CD4-positive, alpha-beta memory T cell (primary cell): ENCODE measurements at regions of chr1 and their contacts with region 1.

Region 1: GRCh38 chr1:15128520-15129313 is 24.8 kb upstream of the TMEM51 start:
- DNase-seq: peak in 4 of 5 donors; percentile 40 to 59 (median 44)
- H3K4me3 ChIP-seq: no peak overlapping the region
- H3K4me3 Mint-ChIP-seq: no peak overlapping the region
- H3K27ac ChIP-seq: no peak overlapping the region
- H3K27ac Mint-ChIP-seq: no peak overlapping the region
- H3K4me1 ChIP-seq: no peaks in the 10 kb centered on the region
- H3K4me1 Mint-ChIP-seq: no peaks in the 10 kb centered on the region
- H3K27me3 ChIP-seq: no peaks in the 10 kb centered on the region
- H3K27me3 Mint-ChIP-seq: peaks cover 4 to 16% of the 10 kb centered on the region in 2 donors

Region 2: GRCh38 chr1:15245593-15246360 is 117.1 kb after region 1 on chr1:
- CTCF ChIA-PET with region 1: no interaction called
- POLR2A ChIA-PET with region 1: no interaction called
- intact Hi-C with region 1: no loop called
- DNase-seq: no peak
- H3K4me3 ChIP-seq: no peak overlapping the region
- H3K4me3 Mint-ChIP-seq: peak overlapping the region in 4 of 8 donors; percentile 5 to 61 (median 36)
- H3K27ac ChIP-seq: no peak overlapping the region
- H3K27ac Mint-ChIP-seq: no peak overlapping the region
- H3K4me1 ChIP-seq: peaks cover 25% of the 10 kb centered on the region
- H3K4me1 Mint-ChIP-seq: peaks cover 21 to 44% (median 30%) of the 10 kb centered on the region in 4 donors
- H3K27me3 ChIP-seq: no peaks in the 10 kb centered on the region
- H3K27me3 Mint-ChIP-seq: peaks cover 29 to 34% of the 10 kb centered on the region in 2 donors

Region 3: DNA sequence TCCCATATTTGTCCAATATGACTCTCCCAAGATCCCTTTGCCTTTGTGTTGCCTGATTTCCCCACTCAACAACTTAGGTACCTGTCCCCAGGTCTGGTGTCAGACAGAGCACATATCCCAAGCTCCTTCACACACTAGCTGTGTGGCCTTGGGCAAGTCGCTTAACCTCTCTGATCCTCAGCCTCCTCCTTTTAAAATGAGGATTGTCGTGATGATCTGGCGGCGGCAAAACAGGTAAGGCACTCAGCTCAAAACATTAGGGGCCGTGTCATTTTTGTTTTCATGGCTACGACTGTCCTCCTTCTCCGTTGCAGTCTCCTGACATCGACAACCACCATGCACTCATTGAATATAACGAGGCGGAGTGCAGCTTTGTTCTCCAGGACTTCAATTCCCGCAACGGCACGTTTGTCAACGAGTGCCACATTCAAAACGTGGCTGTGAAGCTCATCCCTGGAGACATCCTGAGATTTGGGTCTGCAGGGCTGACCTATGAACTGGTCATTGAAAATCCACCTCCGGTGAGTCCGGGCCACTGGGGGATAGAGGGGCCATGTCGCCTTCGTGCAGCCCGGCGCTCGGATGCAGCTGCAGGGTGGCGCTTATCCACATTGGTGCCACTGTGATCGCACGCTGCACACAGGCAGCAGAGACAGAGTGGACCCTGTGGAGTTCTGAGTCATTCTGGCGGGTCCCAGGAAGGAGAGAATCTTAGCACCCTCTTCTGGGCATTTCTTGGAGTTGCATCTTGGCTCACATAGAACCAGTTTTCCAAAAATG is 143.5 kb after region 1 on chr1:
- CTCF ChIA-PET with region 1: interaction called, 18 read pairs
- POLR2A ChIA-PET with region 1: no interaction called
- intact Hi-C with region 1: no loop called
- DNase-seq: peak in 1 of 5 donors; percentile 20
- H3K4me3 ChIP-seq: no peak overlapping the region
- H3K4me3 Mint-ChIP-seq: peak overlapping the region in 1 of 8 donors; percentile 17
- H3K27ac ChIP-seq: no peak overlapping the region
- H3K27ac Mint-ChIP-seq: no peak overlapping the region
- H3K4me1 ChIP-seq: no peaks in the 10 kb centered on the region
- H3K4me1 Mint-ChIP-seq: peaks cover 0 to 6% (median 1%) of the 10 kb centered on the region in 4 donors
- H3K27me3 ChIP-seq: peaks cover 5% of the 10 kb centered on the region
- H3K27me3 Mint-ChIP-seq: peaks cover 19 to 28% of the 10 kb centered on the region in 2 donors

Region 4: GRCh38 chr1:15299806-15300205 is 171.1 kb after region 1 on chr1:
- CTCF ChIA-PET with region 1: interaction called, 75 read pairs
- POLR2A ChIA-PET with region 1: no interaction called
- intact Hi-C with region 1: no loop called
- DNase-seq: no peak
- H3K4me3 ChIP-seq: no peak overlapping the region
- H3K4me3 Mint-ChIP-seq: no peak overlapping the region
- H3K27ac ChIP-seq: no peak overlapping the region
- H3K27ac Mint-ChIP-seq: no peak overlapping the region
- H3K4me1 ChIP-seq: no peaks in the 10 kb centered on the region
- H3K4me1 Mint-ChIP-seq: peaks cover 0 to under 1% (median 0%) of the 10 kb centered on the region in 4 donors
- H3K27me3 ChIP-seq: no peaks in the 10 kb centered on the region
- H3K27me3 Mint-ChIP-seq: peaks cover 1 to 4% of the 10 kb centered on the region in 2 donors

Region 5: DNA sequence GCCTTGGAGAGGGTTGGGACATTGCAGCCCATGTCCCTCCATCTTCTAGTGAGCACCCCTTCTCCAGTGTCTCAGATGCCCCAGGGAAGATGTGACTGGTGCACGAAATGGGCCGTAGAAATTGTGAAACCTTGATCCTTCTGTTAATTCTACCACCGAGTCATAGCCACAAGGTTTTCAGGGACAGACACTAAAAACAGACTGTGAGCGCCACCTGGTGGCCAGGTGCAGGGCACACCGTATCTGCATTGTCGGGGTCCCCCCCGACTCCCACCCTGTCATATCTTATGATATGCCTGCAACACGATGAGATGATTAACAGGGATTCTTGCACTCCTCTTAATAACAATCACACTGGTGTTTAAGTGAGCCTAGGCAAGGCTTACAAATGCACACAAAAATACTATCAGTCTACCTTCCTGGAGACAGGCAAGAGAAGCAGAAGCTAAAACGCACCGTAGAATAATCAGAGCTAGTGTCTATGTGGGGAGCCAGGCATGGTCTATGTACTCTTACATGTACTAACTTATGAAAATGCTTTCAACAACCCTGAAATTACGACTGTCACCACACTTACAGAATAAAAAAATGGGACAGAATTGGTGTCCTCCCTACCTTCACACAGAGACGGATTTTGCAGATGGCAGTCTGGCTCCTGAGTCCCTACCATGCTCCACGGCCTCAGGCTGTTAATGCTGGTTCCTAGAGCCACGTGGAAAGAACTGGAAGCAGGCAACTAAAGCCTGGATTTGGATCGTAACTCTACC is 176.2 kb after region 1 on chr1:
- CTCF ChIA-PET with region 1: interaction called, 75 read pairs
- POLR2A ChIA-PET with region 1: no interaction called
- intact Hi-C with region 1: no loop called
- DNase-seq: peak in 4 of 5 donors; percentile 42 to 48 (median 48)
- H3K4me3 ChIP-seq: no peak overlapping the region
- H3K4me3 Mint-ChIP-seq: no peak overlapping the region
- H3K27ac ChIP-seq: no peak overlapping the region
- H3K27ac Mint-ChIP-seq: no peak overlapping the region
- H3K4me1 ChIP-seq: no peaks in the 10 kb centered on the region
- H3K4me1 Mint-ChIP-seq: peaks cover 0 to 2% (median 0%) of the 10 kb centered on the region in 4 donors
- H3K27me3 ChIP-seq: no peaks in the 10 kb centered on the region
- H3K27me3 Mint-ChIP-seq: peaks cover 1 to 8% of the 10 kb centered on the region in 2 donors

Region 6: DNA sequence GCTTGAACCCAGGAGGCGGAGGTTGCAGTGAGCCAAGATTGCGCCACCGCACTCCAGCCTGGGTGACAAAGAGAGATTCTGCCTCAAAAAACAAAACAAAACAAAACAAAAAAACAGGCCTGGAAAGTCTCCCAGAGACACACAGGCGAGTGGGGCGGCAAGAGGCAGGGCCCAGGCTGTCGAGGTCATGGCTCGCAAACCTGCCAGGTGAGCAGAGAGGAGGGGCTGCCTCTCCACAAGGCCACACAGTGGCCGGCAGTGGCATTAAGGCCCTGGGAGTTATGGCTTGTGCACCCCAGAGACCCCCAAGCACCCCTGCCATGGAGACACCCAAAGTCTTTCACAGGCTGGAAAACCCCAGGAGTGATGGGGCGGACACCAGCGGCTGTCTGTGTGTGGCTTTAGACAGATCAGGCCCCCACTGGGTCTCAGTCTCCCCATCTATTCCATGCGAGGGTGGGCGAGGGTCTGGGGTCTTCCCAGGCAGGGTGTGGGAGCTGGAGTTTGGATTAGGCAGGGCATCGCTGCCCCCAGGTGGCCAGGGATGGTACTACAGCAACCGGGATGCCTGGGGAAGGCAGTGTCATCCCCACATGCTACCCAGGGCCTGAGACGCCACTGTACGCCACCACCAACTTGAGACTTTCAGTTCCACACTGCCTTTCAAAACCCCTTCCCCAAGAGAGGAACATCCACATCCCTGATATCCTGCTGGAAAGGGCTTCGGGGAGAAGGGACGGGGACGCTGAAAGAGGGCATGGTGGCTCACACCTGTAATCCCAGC is 302.3 kb after region 1 on chr1:
- CTCF ChIA-PET with region 1: interaction called, 15 read pairs
- POLR2A ChIA-PET with region 1: no interaction called
- intact Hi-C with region 1: no loop called
- DNase-seq: peak; percentile 62 to 75 (median 65)
- H3K4me3 ChIP-seq: no peak overlapping the region
- H3K4me3 Mint-ChIP-seq: no peak overlapping the region
- H3K27ac ChIP-seq: no peak overlapping the region
- H3K27ac Mint-ChIP-seq: peak overlapping the region in 5 of 7 donors; percentile 42 to 86 (median 72)
- H3K4me1 ChIP-seq: no peaks in the 10 kb centered on the region
- H3K4me1 Mint-ChIP-seq: peaks cover 0 to 7% (median 0%) of the 10 kb centered on the region in 4 donors
- H3K27me3 ChIP-seq: no peaks in the 10 kb centered on the region
- H3K27me3 Mint-ChIP-seq: no peaks in the 10 kb centered on the region